ENCODE measurements at regions of chr22 and their contacts with region 1.

Region 1: GRCh38 chr22:30386960-30387827 is at the start of gene RNF215:
- DNase-seq: peak; percentile 91
- ATAC-seq: peak; percentile 88
- total RNA-seq, gene RNF215: 25.5 TPM

Region 2: DNA sequence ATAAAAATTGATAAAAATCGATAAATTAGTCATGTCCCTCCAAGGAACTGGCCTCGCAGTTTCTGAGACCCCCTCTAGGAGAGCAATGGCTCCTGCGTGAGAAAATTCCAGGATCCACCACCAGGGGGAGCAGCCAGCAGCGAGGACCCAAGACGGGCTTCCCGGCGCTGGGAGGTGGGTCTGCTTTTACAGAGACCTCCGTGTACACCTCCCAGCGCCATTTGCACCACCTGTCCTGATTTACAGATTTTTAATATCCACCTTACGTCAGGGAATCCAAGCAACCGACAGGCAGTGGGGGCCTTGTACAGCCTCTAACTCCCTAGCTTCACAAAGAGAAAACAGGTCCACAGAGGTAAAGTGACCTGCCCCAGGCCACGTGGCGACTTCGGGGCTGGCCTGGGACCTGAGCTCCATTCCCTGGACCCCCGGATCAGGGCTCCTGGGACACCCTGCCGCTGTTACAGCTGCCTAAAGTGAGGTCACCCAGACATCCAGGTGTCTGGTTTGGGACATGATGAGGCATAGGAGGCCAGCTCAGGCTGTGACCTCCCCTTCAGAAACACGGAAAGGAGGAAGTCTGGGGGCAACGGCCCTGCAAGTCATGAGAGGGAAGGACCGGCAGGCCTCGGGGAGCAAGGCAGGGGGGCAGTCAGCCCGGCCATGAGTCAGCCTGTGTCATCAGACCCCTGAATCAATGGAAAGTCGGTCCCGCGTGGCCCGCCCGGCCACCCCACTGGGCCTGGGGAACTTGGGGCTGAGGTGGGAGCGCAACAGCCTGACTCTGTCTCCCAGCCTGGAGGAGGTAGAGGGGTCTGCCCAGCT is 124.1 kb before region 1 on chr22:
- intact Hi-C with region 1: loop called (anchors 2 kb)
- DNase-seq: peak; percentile 91
- ATAC-seq: peak; percentile 65

Region 3: DNA sequence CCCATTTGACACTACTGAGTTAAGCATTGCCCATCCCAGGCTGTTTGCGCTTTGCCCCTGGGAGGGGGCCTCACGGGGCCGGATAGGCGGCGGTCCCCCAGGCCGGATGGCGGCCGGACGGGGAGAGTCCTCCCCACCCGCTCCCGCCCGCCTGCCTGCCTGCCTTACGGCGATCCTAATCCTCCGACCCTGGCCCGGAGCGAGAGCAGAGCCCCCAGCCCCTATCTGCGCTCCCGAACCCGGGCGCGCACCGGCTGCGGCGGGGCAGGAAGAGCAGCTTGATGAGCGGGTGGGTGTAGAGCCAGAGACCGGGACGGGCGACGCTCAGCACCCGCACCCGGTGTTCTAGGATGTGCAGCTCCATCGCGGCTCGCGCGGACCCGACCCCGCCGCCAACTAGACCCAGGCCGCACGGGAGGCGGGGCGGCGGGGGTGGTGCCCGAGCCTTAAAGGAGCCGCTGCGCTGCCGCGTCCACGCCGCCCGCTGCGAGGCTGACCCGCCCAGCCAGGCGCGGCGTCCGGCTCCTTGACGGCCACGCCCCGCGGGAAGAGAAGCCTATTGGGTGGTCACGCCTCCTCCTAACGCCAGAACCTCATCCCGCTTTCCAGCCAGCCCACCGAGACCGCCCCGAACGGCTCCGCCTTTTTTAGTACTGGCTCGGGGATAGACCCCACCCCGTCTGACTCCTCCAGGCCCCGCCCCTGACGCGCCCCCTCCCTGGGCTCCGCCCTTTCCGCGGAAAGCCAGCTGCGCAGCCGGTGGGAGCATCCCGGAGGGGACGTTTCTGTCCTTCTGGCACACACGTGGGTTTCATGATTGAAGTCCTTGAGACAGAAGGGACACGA is 97.8 kb before region 1 on chr22 and contains the start of gene CASTOR1:
- intact Hi-C with region 1: loop called (anchors 5 kb)
- DNase-seq: peak; percentile 99
- ATAC-seq: peak; percentile 91
- total RNA-seq, gene CASTOR1: 15.9 TPM